Transverse colon (tissue), 4 donors: ENCODE measurements at regions of chrX and their contacts with region 1.

Region 1: GRCh38 chrX:70422851-70423341 is at the start of gene GDPD2:
- DNase-seq: peak; percentile 38
- H3K4me3 ChIP-seq: peak within 1 kb of the TSS in 2 of 4 donors; percentile 14 to 36
- H3K27ac ChIP-seq: peak within 1 kb of the TSS in 1 of 4 donors; percentile 26
- H3K4me1 ChIP-seq: no peaks in the 10 kb centered on the region
- H3K27me3 ChIP-seq: no peaks in the 10 kb centered on the region
- CTCF ChIP-seq: peak in 4 of 5 experiments; percentile 17 to 46 (median 28)
- EP300 ChIP-seq: no peak
- POLR2A ChIP-seq: no peak
- total RNA-seq, gene GDPD2: 1.6 to 68.1 (median 31.2) TPM

Region 2: GRCh38 chrX:70664726-70665125 is 241.8 kb after region 1 on chrX:
- in situ Hi-C with region 1: loop called in 1 of 4 experiments (anchors 25 kb)
- intact Hi-C with region 1: no loop called
- DNase-seq: no peak
- H3K4me3 ChIP-seq: no peak overlapping the region
- H3K27ac ChIP-seq: no peak overlapping the region
- H3K4me1 ChIP-seq: no peaks in the 10 kb centered on the region
- H3K27me3 ChIP-seq: no peaks in the 10 kb centered on the region
- CTCF ChIP-seq: peak in 3 of 5 experiments; percentile 17 to 23 (median 20)
- EP300 ChIP-seq: no peak
- POLR2A ChIP-seq: no peak

Region 3: DNA sequence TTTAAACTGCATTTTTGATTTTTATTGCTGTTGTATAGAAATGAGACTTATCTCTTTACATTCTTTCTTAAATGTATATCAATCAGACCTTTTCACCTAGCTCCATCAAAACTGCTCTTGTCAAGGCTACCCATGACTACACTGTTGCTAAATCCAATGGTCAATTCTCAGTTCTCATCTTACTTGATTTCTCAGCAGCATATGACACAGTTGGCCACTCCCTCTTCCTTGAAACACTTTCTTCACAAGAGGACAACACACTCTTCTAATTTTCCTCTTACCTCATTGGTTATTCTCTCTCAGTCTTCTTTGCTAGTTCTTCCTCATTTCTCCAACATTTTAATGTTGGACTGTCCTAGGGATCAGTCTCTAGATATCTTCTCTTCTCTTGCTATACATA is 1976.9 kb after region 1 on chrX:
- in situ Hi-C with region 1: no loop called
- intact Hi-C with region 1: no loop called
- DNase-seq: no peak
- H3K4me3 ChIP-seq: no peak overlapping the region
- H3K27ac ChIP-seq: no peak overlapping the region
- H3K4me1 ChIP-seq: peaks cover 0 to 2% (median 0%) of the 10 kb centered on the region in 4 donors
- H3K27me3 ChIP-seq: no peaks in the 10 kb centered on the region
- CTCF ChIP-seq: no peak
- EP300 ChIP-seq: no peak
- POLR2A ChIP-seq: no peak